H1 (cell line): ENCODE measurements at regions of chr21 and their contacts with region 1.

Region 1: DNA sequence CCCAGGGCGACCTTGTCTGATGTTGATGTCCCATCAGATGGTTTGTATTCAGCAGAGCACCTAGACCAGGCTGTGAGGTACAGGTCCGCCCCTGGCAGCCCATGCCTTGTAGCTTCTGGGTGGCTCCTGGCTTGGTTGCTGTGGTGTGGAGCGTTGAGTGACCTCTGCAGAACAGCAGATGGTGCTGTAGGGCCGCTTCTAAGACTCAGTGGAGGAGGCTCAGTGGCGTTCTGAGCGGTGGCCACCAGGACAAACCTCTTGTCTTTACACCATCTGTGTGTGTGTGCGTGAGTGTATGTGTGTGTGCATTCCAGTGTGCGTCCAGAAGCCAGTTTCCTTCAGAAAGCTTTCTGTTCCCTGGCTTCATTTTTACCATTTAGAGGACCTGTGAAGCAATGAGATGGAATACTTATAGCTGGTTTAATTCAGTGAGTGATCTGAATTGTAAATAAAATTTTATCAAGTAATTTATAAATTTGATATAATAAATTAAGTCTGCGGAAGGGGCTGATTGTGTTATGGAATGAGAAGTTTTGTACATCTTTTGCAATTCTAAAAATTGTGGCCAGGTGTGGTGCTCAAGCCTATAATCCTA is 66.1 kb downstream of the ADARB1 start:
- DNase-seq: peak; percentile 68 to 73
- H3K4me3 ChIP-seq: no peak overlapping the region
- H3K27ac ChIP-seq: no peak overlapping the region
- H3K4me1 ChIP-seq: no peaks in the 10 kb centered on the region
- H3K27me3 ChIP-seq: no peaks in the 10 kb centered on the region
- CTCF ChIP-seq: peak; percentile 90 to 99 (median 99)
- EP300 ChIP-seq: no peak
- POLR2A ChIP-seq: no peak
- RAD21 ChIP-seq: peak; percentile 97

Region 2: GRCh38 chr21:44965251-44966022 is 175.0 kb before region 1 on chr21:
- CTCF ChIA-PET with region 1: interaction called, 28 read pairs
- POLR2A ChIA-PET with region 1: no interaction called
- DNase-seq: no peak
- H3K4me3 ChIP-seq: no peak overlapping the region
- H3K27ac ChIP-seq: no peak overlapping the region
- H3K4me1 ChIP-seq: no peaks in the 10 kb centered on the region; a peak in 1 of 7 replicates
- H3K27me3 ChIP-seq: no peaks in the 10 kb centered on the region
- CTCF ChIP-seq: no peak
- EP300 ChIP-seq: no peak
- POLR2A ChIP-seq: no peak
- RAD21 ChIP-seq: no peak

Region 3: GRCh38 chr21:45030682-45031570 is 109.5 kb before region 1 on chr21:
- CTCF ChIA-PET with region 1: interaction called, 10 read pairs
- POLR2A ChIA-PET with region 1: no interaction called
- DNase-seq: peak in 1 of 2 experiments; percentile 47
- H3K4me3 ChIP-seq: peak overlapping the region in 1 of 4 experiments; percentile 27; a peak in 2 of 8 replicates
- H3K27ac ChIP-seq: no peak overlapping the region
- H3K4me1 ChIP-seq: peaks cover 7 to 36% (median 29%) of the 10 kb centered on the region in 4 experiments
- H3K27me3 ChIP-seq: peaks cover 0 to 6% (median 3%) of the 10 kb centered on the region in 4 experiments; a peak in 3 of 7 replicates
- CTCF ChIP-seq: no peak
- EP300 ChIP-seq: no peak
- POLR2A ChIP-seq: no peak
- RAD21 ChIP-seq: no peak

Region 4: DNA sequence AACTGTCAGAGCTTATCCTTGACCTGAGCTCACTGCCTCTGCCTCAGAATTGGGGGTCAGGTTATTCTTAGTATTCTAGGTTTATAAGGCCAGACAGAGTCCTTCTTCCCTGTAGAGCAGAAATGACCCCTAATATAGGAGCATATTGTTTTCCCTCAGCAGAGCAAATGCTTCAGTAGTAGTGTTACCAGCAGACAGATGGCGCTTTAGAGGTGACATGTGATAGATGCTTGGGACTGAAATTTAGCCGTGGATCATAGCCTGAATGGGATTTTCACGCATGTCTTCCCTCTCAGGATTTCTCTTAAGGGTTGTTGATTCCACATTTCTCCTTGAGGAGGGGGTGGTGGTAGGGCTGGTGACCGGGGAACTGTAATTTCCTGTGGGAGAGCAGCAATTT is 41.6 kb before region 1 on chr21:
- CTCF ChIA-PET with region 1: interaction called, 99 read pairs
- POLR2A ChIA-PET with region 1: interaction called, 3 read pairs
- DNase-seq: no peak
- H3K4me3 ChIP-seq: no peak overlapping the region
- H3K27ac ChIP-seq: no peak overlapping the region
- H3K4me1 ChIP-seq: no peaks in the 10 kb centered on the region; a peak in 1 of 7 replicates
- H3K27me3 ChIP-seq: no peaks in the 10 kb centered on the region
- CTCF ChIP-seq: peak in 2 of 3 experiments; percentile 41 to 72; a peak in 2 of 4 replicates
- EP300 ChIP-seq: no peak
- POLR2A ChIP-seq: no peak
- RAD21 ChIP-seq: peak; percentile 28 to 44; a peak in 2 of 4 replicates

Region 5: GRCh38 chr21:45130324-45130774 is 10.1 kb before region 1 on chr21:
- CTCF ChIA-PET with region 1: interaction called, 144 read pairs
- POLR2A ChIA-PET with region 1: interaction called, 4 read pairs
- DNase-seq: no peak
- H3K4me3 ChIP-seq: no peak overlapping the region
- H3K27ac ChIP-seq: no peak overlapping the region
- H3K4me1 ChIP-seq: no peaks in the 10 kb centered on the region
- H3K27me3 ChIP-seq: no peaks in the 10 kb centered on the region
- CTCF ChIP-seq: no peak
- EP300 ChIP-seq: no peak
- POLR2A ChIP-seq: no peak
- RAD21 ChIP-seq: no peak

Region 6: DNA sequence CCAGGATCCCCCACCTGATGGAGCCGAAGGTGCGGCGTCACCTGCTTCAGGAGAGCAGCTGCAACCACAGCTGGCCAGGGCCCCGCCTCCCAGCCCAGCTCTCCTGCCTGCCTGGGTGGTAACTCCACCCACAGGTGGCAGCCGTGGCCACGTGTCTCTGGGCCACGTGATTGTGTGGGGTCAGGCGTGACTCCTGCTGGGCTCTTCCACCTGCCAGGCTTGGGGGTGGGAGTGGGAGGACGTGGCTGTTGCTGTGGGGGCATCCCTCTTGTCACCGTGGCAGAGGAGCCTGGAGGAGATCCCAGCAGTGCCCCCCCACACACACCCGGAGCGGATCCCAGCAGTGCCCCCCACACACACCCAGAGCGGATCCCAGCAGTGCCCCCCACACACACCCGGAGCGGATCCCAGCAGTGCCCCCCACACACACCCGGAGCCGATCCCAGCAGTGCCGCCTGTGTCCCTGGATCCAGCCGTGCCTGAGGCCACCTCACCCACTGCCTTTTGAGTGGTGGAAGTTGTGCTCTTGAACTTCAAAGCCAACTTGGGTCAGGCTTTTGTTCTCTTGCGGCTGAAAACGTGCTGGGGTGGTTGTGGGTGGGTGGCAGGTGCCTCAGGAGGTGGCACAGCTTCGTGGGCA is 115.1 kb after region 1 on chr21:
- CTCF ChIA-PET with region 1: interaction called, 37 read pairs
- POLR2A ChIA-PET with region 1: no interaction called
- DNase-seq: peak in 1 of 2 experiments; percentile 45
- H3K4me3 ChIP-seq: no peak overlapping the region
- H3K27ac ChIP-seq: no peak overlapping the region
- H3K4me1 ChIP-seq: peaks cover 0 to 5% (median 0%) of the 10 kb centered on the region in 4 experiments; a peak in 2 of 7 replicates
- H3K27me3 ChIP-seq: no peaks in the 10 kb centered on the region
- CTCF ChIP-seq: no peak
- EP300 ChIP-seq: no peak
- POLR2A ChIP-seq: no peak
- RAD21 ChIP-seq: 0 out of 4 replicates have a peak, but pooled peaks of 1 of the 2 experiments have one; percentile 7

Region 7: GRCh38 chr21:45287438-45288391 is 147.3 kb after region 1 on chr21 and contains the start of gene POFUT2:
- CTCF ChIA-PET with region 1: interaction called, 49 read pairs
- POLR2A ChIA-PET with region 1: no interaction called
- DNase-seq: peak; percentile 91 to 99
- H3K4me3 ChIP-seq: peak within 1 kb of the TSS; percentile 76 to 91 (median 80)
- H3K27ac ChIP-seq: peak within 1 kb of the TSS; percentile 56; the same call in 1 of the 2 replicates
- H3K4me1 ChIP-seq: peaks cover 0 to 12% (median 3%) of the 10 kb centered on the region in 4 experiments; a peak in 3 of 7 replicates
- H3K27me3 ChIP-seq: no peaks in the 10 kb centered on the region
- CTCF ChIP-seq: peak in 1 of 3 experiments; percentile 5; a peak in 1 of 4 replicates
- EP300 ChIP-seq: no peak
- POLR2A ChIP-seq: peak in 1 of 2 experiments; percentile 41; a peak in 1 of 3 replicates
- RAD21 ChIP-seq: no peak
- total RNA-seq, gene POFUT2: 32.1 and 34.6 TPM in 2 replicates

Region 8: DNA sequence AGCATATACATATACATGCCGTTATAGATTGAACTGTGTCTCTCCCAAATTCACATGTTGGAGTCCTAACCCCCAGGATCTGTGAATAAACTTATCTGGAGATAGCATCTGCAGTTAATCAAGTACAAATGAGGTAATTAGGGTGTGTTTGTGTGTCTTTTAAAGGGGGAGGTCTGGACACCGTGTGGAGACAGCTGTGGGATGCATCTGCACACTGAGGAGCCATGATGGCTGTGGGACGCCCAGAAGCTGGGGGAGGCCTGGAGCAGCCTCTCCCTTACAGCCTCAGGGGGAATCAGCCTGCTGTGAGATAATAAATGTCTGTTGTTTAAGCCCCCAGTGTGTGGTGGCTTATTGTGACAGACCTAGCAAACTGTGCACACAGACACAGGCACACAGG is 212.8 kb after region 1 on chr21:
- CTCF ChIA-PET with region 1: no interaction called
- POLR2A ChIA-PET with region 1: no interaction called
- DNase-seq: no peak
- H3K4me3 ChIP-seq: no peak overlapping the region
- H3K27ac ChIP-seq: no peak overlapping the region
- H3K4me1 ChIP-seq: no peaks in the 10 kb centered on the region; a peak in 1 of 7 replicates
- H3K27me3 ChIP-seq: no peaks in the 10 kb centered on the region
- CTCF ChIP-seq: no peak
- EP300 ChIP-seq: no peak
- POLR2A ChIP-seq: no peak
- RAD21 ChIP-seq: no peak